Activated CD8-positive, alpha-beta memory T cell treated with anti-CD3 and anti-CD28 coated beads, Interleukin-2, amount 10 ng/mL, durations not matched to agents 7 days and 5 days (primary cell): ENCODE measurements at regions of chr4 and their contacts with region 1.

Region 1: GRCh38 chr4:87985097-87985886 is 9.8 kb downstream of the SPP1 start:
- DNase-seq: peak; percentile 59
- ATAC-seq: peak; percentile 85
- H3K4me3 Mint-ChIP-seq: no peak overlapping the region
- H3K27ac Mint-ChIP-seq: no peak overlapping the region
- H3K4me1 Mint-ChIP-seq: peaks cover under 1% of the 10 kb centered on the region
- H3K27me3 Mint-ChIP-seq: peaks cover 37% of the 10 kb centered on the region

Region 2: DNA sequence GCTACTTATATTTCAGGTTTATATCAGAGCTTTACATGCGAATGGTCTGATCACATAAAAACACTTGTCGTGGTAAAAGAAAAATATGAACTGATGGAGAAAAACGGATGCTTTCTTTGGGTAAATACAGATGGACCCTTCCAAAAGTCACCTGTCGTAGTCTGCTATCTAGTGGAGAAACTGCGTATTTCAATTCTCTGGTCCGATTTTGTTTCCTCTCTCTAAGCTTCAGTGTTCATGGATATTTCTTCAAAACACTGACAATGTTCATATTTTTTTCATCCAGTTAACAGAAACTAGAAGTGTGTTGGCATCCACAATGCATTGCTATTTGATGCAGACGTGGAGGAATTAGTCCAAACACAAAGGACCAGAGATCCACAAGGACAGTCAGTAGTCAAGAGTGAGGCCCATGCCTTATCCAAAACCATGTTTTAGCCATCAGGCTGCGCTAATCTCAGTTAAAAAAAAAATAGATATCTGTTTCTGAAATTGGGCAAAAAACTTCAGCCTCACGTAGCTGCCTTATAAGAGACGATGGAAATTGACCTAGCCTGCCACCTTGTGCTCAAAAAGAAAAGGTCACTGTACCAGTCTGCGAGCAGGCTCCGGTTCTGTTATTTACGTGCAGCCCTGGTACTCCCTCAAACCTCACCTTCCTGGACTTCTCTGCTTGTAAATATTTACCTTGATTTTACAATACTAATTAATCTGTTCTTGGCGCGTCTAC is 136.5 kb before region 1 on chr4:
- CTCF ChIA-PET with region 1: interaction called, 16 read pairs
- DNase-seq: peak; percentile 54
- ATAC-seq: peak; percentile 94
- H3K4me3 Mint-ChIP-seq: peak overlapping the region; percentile 21
- H3K27ac Mint-ChIP-seq: no peak overlapping the region
- H3K4me1 Mint-ChIP-seq: peaks cover 13% of the 10 kb centered on the region
- H3K27me3 Mint-ChIP-seq: peaks cover 40% of the 10 kb centered on the region

Region 3: GRCh38 chr4:87901422-87901992 is 83.8 kb before region 1 on chr4:
- CTCF ChIA-PET with region 1: no interaction called
- DNase-seq: no peak
- ATAC-seq: no peak
- H3K4me3 Mint-ChIP-seq: no peak overlapping the region
- H3K27ac Mint-ChIP-seq: no peak overlapping the region
- H3K4me1 Mint-ChIP-seq: peaks cover 6% of the 10 kb centered on the region
- H3K27me3 Mint-ChIP-seq: peaks cover 45% of the 10 kb centered on the region

Region 4: DNA sequence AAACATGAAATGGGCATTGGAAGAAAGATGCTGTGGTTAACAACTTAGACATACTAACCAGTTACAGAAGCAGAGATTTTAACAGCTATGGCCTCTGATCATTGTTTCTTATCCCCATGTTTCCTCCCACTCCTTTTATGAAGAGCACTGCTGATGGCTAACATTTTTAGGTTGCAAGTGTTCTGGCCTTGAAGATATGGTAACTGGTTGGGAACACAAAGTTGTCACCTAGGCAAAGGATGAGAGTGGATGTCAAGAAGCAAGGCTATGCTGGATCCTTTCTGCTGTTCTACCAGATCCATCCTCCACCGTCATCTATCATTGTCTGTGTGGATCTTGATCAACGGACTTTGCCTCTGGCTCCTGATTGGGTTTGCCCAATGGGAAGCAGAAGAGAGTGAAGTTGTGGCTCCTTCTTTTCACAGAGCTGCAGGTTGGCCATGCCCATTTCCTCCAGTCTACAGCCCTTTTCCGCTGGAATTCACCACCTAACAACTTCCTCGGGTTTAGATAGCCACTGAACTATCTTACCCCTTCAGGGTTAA is 58.7 kb before region 1 on chr4:
- CTCF ChIA-PET with region 1: no interaction called
- DNase-seq: no peak
- ATAC-seq: no peak
- H3K4me3 Mint-ChIP-seq: no peak overlapping the region
- H3K27ac Mint-ChIP-seq: no peak overlapping the region
- H3K4me1 Mint-ChIP-seq: no peaks in the 10 kb centered on the region
- H3K27me3 Mint-ChIP-seq: peaks cover 9% of the 10 kb centered on the region

Region 5: GRCh38 chr4:87938746-87939145 is 46.5 kb before region 1 on chr4:
- CTCF ChIA-PET with region 1: no interaction called
- DNase-seq: no peak
- ATAC-seq: no peak
- H3K4me3 Mint-ChIP-seq: no peak overlapping the region
- H3K27ac Mint-ChIP-seq: no peak overlapping the region
- H3K4me1 Mint-ChIP-seq: no peaks in the 10 kb centered on the region
- H3K27me3 Mint-ChIP-seq: peaks cover 25% of the 10 kb centered on the region

Region 6: GRCh38 chr4:88001871-88002270 is 16.6 kb after region 1 on chr4:
- CTCF ChIA-PET with region 1: interaction called, 10 read pairs
- DNase-seq: no peak
- ATAC-seq: no peak
- H3K4me3 Mint-ChIP-seq: no peak overlapping the region
- H3K27ac Mint-ChIP-seq: no peak overlapping the region
- H3K4me1 Mint-ChIP-seq: peaks cover 2% of the 10 kb centered on the region
- H3K27me3 Mint-ChIP-seq: peaks cover 41% of the 10 kb centered on the region